ENCODE measurements at regions of chr14 and their contacts with region 1.

Region 1: GRCh38 chr14:22822571-22823098 is 7.1 kb upstream of the MRPL52 start:
- DNase-seq: peak; percentile 92 to 95
- H3K4me3 ChIP-seq: peak overlapping the region; percentile 57 to 94 (median 76)
- H3K27ac ChIP-seq: peak overlapping the region; percentile 95
- H3K4me1 ChIP-seq: peaks cover 16 to 26% (median 20%) of the 10 kb centered on the region in 4 experiments
- H3K27me3 ChIP-seq: no peaks in the 10 kb centered on the region
- CTCF ChIP-seq: peak; percentile 76 to 97 (median 79)
- EP300 ChIP-seq: peak in 1 of 2 experiments; percentile 87; a peak in 1 of 3 replicates
- POLR2A ChIP-seq: peak in 1 of 2 experiments; percentile 53; a peak in 2 of 3 replicates
- RAD21 ChIP-seq: peak; percentile 94 to 97

Region 2: DNA sequence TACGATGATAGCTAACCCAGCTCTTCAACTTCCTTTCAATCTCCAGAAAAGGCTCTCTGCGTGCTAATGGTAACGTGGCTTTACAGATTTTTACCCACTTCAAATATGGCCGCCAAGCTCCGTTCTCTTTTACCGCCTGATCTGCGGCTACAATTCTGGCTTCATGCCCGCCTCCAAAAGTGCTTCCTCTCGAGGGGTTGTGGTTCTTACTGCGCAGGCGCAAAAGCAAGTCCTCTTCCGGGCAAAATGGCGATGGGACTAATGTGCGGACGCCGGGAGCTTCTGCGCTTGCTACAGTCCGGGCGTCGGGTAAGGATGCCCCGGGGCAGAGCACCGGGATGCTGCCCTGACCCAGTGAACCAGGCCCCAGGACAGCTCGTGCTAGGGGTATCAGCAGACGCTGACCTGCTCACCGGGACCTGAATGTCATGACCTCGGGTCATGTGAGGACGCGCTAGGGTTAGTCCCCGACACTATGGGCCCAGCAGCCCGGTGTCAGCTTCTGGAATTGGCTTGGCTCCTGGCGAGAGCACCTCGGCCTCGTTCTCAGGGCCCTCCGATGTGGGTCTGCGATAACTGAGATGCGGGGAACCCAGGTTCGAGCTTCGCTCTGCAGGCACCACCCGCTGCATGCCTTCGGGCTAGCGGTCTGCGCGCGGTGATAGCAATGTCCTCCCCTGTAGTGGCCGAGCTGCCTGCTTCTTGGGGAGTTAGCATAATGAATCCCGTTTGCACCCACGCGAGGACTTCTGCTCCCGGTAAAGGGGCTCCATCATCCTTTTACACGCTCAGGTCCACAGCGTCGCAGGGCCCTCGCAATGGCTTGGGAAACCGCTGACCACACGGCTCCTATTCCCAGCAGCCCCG is 55.9 kb before region 1 on chr14 and contains the start of gene OXA1L:
- CTCF ChIA-PET with region 1: interaction called, 4 read pairs
- POLR2A ChIA-PET with region 1: interaction called, 12 read pairs
- DNase-seq: peak; percentile 78 to 90
- H3K4me3 ChIP-seq: peak within 1 kb of the TSS; percentile 87 to 97 (median 94)
- H3K27ac ChIP-seq: peak within 1 kb of the TSS; percentile 91
- H3K4me1 ChIP-seq: peaks cover 0 to 2% (median 0%) of the 10 kb centered on the region in 4 experiments; a peak in 2 of 7 replicates
- H3K27me3 ChIP-seq: no peaks in the 10 kb centered on the region
- CTCF ChIP-seq: no peak
- EP300 ChIP-seq: 0 out of 3 replicates have a peak, but pooled peaks of 1 of the 2 experiments have one; percentile 13
- POLR2A ChIP-seq: peak; percentile 50 to 81; a peak in 2 of 3 replicates
- RAD21 ChIP-seq: no peak
- total RNA-seq, gene OXA1L: 125 and 129 TPM in 2 replicates

Region 3: DNA sequence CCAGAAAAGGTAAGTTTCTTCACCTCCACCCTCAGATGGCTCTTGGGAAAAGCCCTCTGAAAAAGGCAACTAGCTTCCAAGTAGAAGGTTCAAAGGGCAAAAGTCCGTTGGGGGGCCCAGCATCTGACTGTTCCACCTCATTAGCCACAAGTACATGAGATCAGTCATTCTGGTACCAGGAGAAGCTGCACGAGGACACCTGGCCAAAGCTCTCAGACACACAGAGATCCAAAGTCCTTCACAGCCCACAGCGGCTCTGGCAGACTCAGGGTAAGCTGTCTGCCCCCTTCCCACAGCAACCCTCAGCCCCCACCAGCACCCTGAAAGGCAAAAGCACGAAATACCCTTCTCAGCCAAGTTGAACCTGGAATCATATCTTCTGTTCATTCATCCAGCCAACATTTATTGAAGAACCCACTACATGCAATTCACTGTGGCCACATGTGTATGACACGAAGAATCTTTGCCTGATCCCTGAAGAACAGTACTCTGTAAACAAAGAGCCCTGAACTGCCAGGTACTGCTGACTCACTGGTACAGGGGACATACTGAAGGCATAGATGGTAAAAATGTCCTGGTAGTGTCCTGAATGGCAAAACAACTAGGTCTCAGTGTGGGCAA is 26.4 kb before region 1 on chr14:
- CTCF ChIA-PET with region 1: interaction called, 4 read pairs
- POLR2A ChIA-PET with region 1: interaction called, 15 read pairs
- DNase-seq: no peak
- H3K4me3 ChIP-seq: no peak overlapping the region
- H3K27ac ChIP-seq: 0 out of 2 replicates have a peak overlapping the region, but pooled peaks have one; percentile 19
- H3K4me1 ChIP-seq: peaks cover 2 to 11% (median 6%) of the 10 kb centered on the region in 4 experiments
- H3K27me3 ChIP-seq: no peaks in the 10 kb centered on the region
- CTCF ChIP-seq: no peak
- EP300 ChIP-seq: no peak
- POLR2A ChIP-seq: no peak
- RAD21 ChIP-seq: no peak

Region 4: DNA sequence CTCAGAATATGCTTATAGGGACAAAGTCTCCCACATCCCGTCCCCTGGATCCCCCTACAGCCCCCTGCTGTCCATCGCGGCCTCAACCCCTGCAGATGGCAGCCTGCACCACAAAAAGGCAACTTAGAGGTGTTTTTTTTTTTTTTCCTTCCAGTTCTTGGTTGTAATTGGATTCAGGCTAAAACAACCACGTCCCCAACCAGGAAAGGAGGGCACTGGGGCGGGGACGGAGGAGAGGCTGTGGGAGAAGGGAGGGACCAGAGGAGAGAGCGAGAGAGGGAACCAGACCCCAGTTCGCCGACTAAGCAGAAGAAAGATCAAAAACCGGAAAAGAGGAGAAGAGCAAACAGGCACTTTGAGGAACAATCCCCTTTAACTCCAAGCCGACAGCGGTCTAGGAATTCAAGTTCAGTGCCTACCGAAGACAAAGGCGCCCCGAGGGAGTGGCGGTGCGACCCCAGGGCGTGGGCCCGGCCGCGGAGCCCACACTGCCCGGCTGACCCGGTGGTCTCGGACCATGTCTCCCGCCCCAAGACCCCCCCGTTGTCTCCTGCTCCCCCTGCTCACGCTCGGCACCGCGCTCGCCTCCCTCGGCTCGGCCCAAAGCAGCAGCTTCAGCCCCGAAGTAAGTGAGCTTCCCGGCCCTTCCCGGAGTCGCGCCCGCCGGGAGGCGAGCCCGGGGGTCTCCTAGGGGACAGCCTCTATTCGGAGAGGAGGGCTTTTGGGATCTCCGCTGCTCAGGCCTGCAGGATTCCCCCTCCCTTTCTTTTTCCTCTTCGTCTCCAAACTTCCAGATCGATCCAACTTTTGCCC is 13.9 kb after region 1 on chr14 and contains the start of gene MMP14:
- CTCF ChIA-PET with region 1: interaction called, 1,562 read pairs
- POLR2A ChIA-PET with region 1: interaction called, 136 read pairs
- DNase-seq: peak in 1 of 2 experiments; percentile 60
- H3K4me3 ChIP-seq: peak within 1 kb of the TSS; percentile 80 to 99 (median 87)
- H3K27ac ChIP-seq: peak within 1 kb of the TSS; percentile 53
- H3K4me1 ChIP-seq: peaks cover 8 to 17% (median 14%) of the 10 kb centered on the region in 4 experiments
- H3K27me3 ChIP-seq: no peaks in the 10 kb centered on the region
- CTCF ChIP-seq: peak; percentile 29 to 41 (median 34); a peak in 3 of 4 replicates
- EP300 ChIP-seq: no peak
- POLR2A ChIP-seq: peak; percentile 43 to 72; a peak in 2 of 3 replicates
- RAD21 ChIP-seq: peak; percentile 36 to 54
- total RNA-seq, gene MMP14: 83.1 and 86.8 TPM in 2 replicates

Region 5: GRCh38 chr14:22900081-22900799 is 77.6 kb after region 1 on chr14:
- CTCF ChIA-PET with region 1: interaction called, 40 read pairs
- POLR2A ChIA-PET with region 1: interaction called, 11 read pairs
- DNase-seq: peak in 1 of 2 experiments; percentile 58
- H3K4me3 ChIP-seq: 0 out of 8 replicates have a peak overlapping the region, but pooled peaks of 1 of the 4 experiments have one; percentile 13
- H3K27ac ChIP-seq: no peak overlapping the region
- H3K4me1 ChIP-seq: peaks cover 0 to 8% (median 4%) of the 10 kb centered on the region in 4 experiments; a peak in 2 of 7 replicates
- H3K27me3 ChIP-seq: peaks cover 10 to 35% (median 28%) of the 10 kb centered on the region in 4 experiments
- CTCF ChIP-seq: peak; percentile 1 to 75 (median 64)
- EP300 ChIP-seq: no peak
- POLR2A ChIP-seq: no peak
- RAD21 ChIP-seq: peak; percentile 64 to 75

Measured in H1 (cell line).